Calu3 (cell line): ENCODE measurements at regions of chr1 and their contacts with region 1.

Region 1: DNA sequence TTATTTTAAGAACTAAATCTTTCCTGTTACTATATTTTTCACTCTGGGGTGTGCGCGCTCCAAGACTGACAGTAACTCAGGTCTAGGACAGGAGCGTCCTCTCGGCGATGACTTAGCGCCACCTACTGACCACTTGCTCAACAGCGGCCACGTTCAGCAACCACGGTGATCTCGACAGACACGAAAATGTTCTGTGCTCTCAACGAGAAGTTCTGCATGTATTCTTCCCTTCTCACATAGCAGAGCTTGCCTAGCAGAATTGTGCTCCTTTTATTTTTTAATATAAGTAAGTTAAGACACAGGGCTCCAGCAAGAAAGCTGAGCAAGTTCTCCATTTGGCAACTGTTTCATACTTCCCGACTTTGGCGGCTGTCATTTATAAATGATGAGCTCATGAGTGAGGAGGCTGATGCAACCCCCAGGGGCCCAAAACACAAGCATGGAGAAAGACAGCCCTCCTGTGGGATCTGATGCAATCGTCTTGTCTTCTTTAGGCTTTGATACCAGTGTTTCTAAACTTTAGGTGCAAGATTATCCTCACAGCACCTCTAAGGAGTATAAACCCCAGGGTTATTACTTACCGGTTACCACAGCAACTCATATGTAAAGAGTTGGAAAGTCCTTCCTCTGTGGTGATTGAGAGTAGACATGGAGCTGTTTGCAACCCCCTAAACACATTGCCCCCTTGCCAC is 92.6 kb downstream of the HHIPL2 start:
- DNase-seq: peak; percentile 89
- H3K4me3 Mint-ChIP-seq: no peak overlapping the region
- H3K27ac Mint-ChIP-seq: no peak overlapping the region
- H3K4me1 Mint-ChIP-seq: peaks cover 12% of the 10 kb centered on the region
- H3K27me3 Mint-ChIP-seq: peaks cover 29% of the 10 kb centered on the region
- CTCF ChIP-seq: peak; percentile 92

Region 2: DNA sequence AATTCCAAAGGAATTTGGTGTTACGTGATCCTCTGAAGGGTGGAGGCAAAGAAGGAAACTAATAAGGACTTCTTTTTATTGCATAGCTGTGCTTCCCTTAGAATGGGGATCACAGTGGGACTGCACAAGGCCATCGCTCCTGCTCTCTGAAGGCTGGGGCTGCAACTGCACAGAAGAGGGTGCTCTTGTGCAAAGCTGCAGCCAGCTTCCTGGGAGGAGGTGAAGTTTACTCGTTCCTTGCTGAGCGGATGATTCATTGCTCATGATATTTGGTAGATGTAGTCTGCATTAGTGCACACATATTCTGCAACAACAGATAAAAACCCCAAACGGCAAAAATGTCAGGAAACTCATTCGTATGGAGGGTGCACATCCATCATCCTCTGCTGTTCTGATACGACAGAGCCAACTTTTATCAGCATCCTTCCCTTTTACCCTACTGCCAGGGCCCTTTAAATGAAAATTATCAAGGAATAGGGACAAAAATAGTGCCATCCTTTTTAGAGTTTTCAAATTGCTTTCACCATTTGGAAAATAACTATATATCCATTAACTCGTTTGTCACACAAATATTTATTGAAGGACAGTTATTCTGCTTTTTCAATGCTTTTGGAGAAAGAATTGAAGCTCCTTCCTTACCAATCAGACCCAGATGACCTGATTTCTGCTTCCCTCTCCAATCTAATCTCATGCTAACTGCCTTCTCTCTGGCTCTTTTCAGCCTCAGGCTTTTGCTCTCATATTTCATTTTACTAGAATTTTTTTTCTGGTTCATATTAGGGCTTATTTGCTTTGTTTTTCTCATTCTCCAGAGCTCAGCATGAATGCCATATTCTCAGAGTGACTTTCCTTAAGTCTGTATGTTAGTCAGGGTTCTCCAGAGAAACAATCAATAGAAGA is 977.0 kb before region 1 on chr1:
- CTCF ChIA-PET with region 1: interaction called, 12 read pairs
- intact Hi-C with region 1: loop called (anchors 5 kb)
- DNase-seq: peak; percentile 81
- H3K4me3 Mint-ChIP-seq: no peak overlapping the region
- H3K27ac Mint-ChIP-seq: no peak overlapping the region
- H3K4me1 Mint-ChIP-seq: peaks cover 14% of the 10 kb centered on the region
- H3K27me3 Mint-ChIP-seq: no peaks in the 10 kb centered on the region
- CTCF ChIP-seq: peak; percentile 71

Region 3: GRCh38 chr1:221994274-221994698 is 461.0 kb before region 1 on chr1:
- CTCF ChIA-PET with region 1: interaction called, 4 read pairs
- intact Hi-C with region 1: loop called (anchors 5 kb)
- DNase-seq: no peak
- H3K4me3 Mint-ChIP-seq: no peak overlapping the region
- H3K27ac Mint-ChIP-seq: peak overlapping the region; percentile 66
- H3K4me1 Mint-ChIP-seq: peaks cover 53% of the 10 kb centered on the region
- H3K27me3 Mint-ChIP-seq: no peaks in the 10 kb centered on the region
- CTCF ChIP-seq: no peak

Region 4: GRCh38 chr1:222171005-222171404 is 284.3 kb before region 1 on chr1:
- CTCF ChIA-PET with region 1: interaction called, 9 read pairs
- intact Hi-C with region 1: loop called (anchors 10 kb)
- DNase-seq: peak; percentile 16
- H3K4me3 Mint-ChIP-seq: no peak overlapping the region
- H3K27ac Mint-ChIP-seq: no peak overlapping the region
- H3K4me1 Mint-ChIP-seq: no peaks in the 10 kb centered on the region
- H3K27me3 Mint-ChIP-seq: no peaks in the 10 kb centered on the region
- CTCF ChIP-seq: peak; percentile 73